Posterior vena cava (tissue), 2 donors: ENCODE measurements at regions of chr16 and their contacts with region 1.

Region 1: GRCh38 chr16:60763869-60764268 is 1272.4 kb downstream of the CDH8 start:
- DNase-seq: no peak

Region 2: GRCh38 chr16:60852628-60853027 is 88.8 kb after region 1 on chr16:
- intact Hi-C with region 1: loop called in 1 of 2 experiments (anchors 5 kb)
- DNase-seq: no peak